Posterior vena cava (tissue), 2 donors: ENCODE measurements at regions of chr1 and their contacts with region 1.

Region 1: DNA sequence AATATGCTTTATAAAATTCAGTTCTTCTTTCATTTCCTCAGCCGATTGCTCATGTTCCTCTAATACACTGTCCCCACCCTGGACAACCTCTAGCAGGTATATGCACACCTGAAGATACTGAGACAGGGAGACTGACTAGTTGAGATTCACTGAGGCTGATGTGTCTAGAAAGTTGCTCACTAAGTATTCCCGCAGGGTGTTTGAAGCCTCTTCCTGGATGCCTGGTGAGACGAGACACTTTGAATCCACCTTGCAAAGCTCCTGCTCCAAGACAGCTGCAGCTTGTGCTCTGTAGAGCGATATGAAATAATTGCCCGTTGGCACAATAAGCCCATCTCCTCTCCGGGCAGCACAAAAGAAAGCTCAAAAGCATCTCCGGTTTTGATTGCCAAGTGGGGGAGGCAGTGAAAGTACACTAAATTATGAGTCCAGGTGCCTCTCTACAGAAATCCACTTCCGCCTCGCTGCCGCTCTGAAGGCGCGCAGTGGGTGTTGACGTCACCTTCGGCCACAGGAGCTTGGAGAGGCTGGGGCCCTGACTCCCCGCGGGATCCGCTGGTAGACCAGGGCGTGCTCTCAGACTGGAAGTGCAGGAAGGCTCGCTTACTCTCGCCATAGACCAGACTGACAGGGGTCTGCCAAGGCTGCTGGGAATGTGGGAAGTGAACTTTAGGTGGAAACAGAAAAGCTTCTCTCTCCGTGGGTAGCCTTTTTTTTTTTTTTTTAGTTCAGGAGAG is 46.3 kb downstream of the GPA33 start:
- DNase-seq: no peak

Region 2: GRCh38 chr1:166855558-166855957 is 188.4 kb before region 1 on chr1:
- intact Hi-C with region 1: no loop called
- DNase-seq: no peak

Region 3: GRCh38 chr1:167003711-167004110 is 40.2 kb before region 1 on chr1:
- intact Hi-C with region 1: no loop called
- DNase-seq: no peak

Region 4: DNA sequence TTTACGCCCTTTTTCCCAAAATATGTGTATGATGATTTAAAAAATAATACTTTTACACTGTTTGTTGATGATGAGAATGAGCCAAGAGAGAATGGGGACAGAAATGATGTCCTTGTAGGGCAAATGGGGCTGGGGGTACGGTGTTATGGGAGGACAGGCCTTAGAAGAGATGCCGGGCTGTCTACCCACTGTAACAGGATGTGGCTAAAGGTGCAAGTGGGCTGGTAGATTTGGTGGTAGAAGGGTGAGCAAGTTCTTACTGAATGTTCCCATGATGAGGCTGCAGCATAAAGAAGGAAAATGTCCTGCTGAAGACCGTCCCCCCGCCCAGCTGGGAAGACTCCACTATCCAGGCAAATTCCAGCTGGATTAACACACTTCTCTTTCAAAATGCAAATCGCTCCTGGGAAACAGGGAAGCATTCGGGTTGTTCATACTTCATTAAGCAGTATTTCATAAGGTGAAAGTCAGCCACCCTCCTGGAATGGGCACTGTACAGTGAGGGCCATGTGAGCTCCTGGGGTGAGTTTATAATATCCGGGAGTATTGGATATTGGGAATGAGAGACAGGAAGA is 32.3 kb after region 1 on chr1:
- intact Hi-C with region 1: loop called in 1 of 2 experiments (anchors 2 kb)
- DNase-seq: no peak